ENCODE measurements at regions of chr22 and their contacts with region 1.

Region 1: DNA sequence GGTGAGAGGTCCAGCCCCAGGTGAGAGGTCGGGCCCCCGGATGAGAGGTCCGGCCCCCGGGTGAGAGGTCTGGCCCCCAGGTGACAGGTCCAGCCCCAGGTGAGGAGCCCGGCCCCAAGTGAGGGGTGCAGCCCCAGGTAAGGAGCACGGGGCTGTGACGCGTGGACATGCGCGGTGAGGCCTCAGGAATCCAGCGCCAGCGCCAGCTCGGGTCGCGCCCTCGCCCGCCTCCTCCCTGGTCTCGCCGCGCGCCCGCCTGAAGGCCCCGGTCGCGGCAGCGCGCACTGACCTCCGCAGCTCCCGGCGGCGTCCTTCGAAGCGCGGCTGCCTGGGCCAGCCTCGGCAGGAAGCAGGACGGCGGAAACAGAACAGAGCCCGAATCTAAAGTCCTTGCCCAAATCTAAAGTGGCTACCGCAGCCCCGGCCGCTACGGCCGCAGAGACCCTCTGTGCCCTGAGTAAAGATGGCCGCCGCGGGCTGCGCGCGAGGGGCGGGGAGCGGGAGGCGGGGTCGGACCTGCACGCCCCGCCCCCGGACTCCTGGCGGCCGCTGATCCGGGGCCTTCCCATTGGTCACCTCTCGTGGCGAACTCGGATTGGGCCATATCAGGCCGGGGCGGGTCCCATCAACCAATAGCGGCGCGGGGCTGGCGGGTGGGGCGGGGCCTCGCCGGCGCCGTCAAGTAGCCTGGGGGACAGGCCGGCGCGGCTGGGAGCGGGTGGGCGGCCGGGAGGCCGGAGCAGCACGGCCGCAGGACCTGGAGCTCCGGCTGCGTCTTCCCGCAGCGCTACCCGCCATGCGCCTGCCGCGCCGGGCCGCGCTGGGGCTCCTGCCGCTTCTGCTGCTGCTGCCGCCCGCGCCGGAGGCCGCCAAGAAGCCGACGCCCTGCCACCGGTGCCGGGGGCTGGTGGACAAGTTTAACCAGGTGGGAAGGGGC is at the starts of genes ALG12 and CRELD2:
- DNase-seq: peak; percentile 99
- ATAC-seq: peak; percentile 99
- H3K4me3 Mint-ChIP-seq: peak within 1 kb of the TSS; percentile 79
- H3K27ac Mint-ChIP-seq: peak within 1 kb of the TSS; percentile 63
- H3K4me1 Mint-ChIP-seq: peaks cover 18% of the 10 kb centered on the region
- H3K27me3 Mint-ChIP-seq: no peaks in the 10 kb centered on the region
- total RNA-seq, gene ALG12: 13.6 to 13.7 TPM
- total RNA-seq, gene CRELD2: 15.2 to 16.4 TPM

Region 2: GRCh38 chr22:49460592-49461281 is 457.5 kb before region 1 on chr22:
- CTCF ChIA-PET with region 1: no interaction called
- POLR2A ChIA-PET with region 1: no interaction called
- intact Hi-C with region 1: no loop called
- DNase-seq: no peak
- ATAC-seq: no peak
- H3K4me3 Mint-ChIP-seq: no peak overlapping the region
- H3K27ac Mint-ChIP-seq: no peak overlapping the region
- H3K4me1 Mint-ChIP-seq: no peaks in the 10 kb centered on the region
- H3K27me3 Mint-ChIP-seq: no peaks in the 10 kb centered on the region

Region 3: GRCh38 chr22:49767355-49768062 is 150.7 kb before region 1 on chr22:
- CTCF ChIA-PET with region 1: interaction called, 11 read pairs
- POLR2A ChIA-PET with region 1: no interaction called
- intact Hi-C with region 1: loop called (anchors 2 to 5 kb)
- DNase-seq: peak; percentile 51
- ATAC-seq: peak; percentile 68
- H3K4me3 Mint-ChIP-seq: no peak overlapping the region
- H3K27ac Mint-ChIP-seq: no peak overlapping the region
- H3K4me1 Mint-ChIP-seq: peaks cover 8% of the 10 kb centered on the region
- H3K27me3 Mint-ChIP-seq: no peaks in the 10 kb centered on the region

Region 4: GRCh38 chr22:49838771-49839717 is 79.2 kb before region 1 on chr22:
- CTCF ChIA-PET with region 1: no interaction called
- POLR2A ChIA-PET with region 1: no interaction called
- intact Hi-C with region 1: loop called in 1 of 2 experiments (anchors 1 kb)
- DNase-seq: peak; percentile 92
- ATAC-seq: peak; percentile 87
- H3K4me3 Mint-ChIP-seq: peak overlapping the region; percentile 73
- H3K27ac Mint-ChIP-seq: peak overlapping the region; percentile 98
- H3K4me1 Mint-ChIP-seq: peaks cover 35% of the 10 kb centered on the region
- H3K27me3 Mint-ChIP-seq: no peaks in the 10 kb centered on the region

Region 5: DNA sequence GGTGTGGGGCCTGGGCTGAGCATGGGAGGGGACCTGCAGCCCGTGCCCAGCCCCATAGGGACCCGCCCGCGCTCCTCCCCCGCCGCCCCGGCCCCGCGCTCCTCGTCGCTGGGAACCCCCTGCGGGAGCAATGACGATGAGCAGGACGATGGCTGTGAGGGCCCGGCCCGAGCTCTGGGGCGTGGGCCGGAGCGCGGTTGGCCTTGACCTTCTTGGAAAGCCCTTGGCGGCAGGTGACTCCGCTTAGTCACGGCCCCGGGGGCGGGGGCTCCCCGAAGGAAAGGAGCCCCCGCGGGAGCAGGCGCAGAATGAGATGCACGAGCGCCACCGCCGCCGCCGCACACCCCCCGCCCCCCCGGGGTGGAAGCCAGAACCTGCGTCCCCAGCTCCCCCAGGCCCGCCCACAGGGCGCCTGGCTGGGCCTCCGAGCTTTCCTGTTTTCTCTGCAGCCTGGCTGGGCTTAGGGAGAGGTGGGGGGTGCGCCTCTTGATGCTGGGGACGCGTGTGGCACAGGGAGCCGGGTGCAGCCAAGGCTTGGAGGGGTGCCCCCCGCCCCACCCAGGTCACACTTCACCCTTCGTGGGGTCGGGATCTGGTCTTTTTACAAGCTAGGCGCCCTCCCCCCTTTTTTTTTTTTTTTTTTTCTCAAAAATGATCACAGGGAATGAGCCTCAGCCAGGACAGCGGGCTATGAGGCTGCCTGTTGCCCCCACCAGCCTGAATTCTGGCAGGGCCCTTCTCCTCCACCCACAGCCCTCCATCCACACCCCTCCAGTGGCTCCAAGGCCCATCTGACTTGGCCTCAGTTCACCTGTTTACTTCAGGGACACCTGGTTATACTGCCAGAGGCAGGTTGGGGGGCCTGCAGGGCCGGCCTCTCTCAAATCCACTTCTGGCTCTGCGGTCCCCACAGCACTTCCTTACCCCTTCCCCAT is 18.0 kb after region 1 on chr22:
- CTCF ChIA-PET with region 1: no interaction called
- POLR2A ChIA-PET with region 1: no interaction called
- intact Hi-C with region 1: loop called in 1 of 2 experiments (anchors 1 kb)
- DNase-seq: peak; percentile 99
- ATAC-seq: peak; percentile 84
- H3K4me3 Mint-ChIP-seq: peak overlapping the region; percentile 64
- H3K27ac Mint-ChIP-seq: peak overlapping the region; percentile 85
- H3K4me1 Mint-ChIP-seq: peaks cover 43% of the 10 kb centered on the region
- H3K27me3 Mint-ChIP-seq: no peaks in the 10 kb centered on the region

Region 6: GRCh38 chr22:50244420-50245213 is 326.4 kb after region 1 on chr22 and contains the start of gene TUBGCP6:
- CTCF ChIA-PET with region 1: no interaction called
- POLR2A ChIA-PET with region 1: no interaction called
- intact Hi-C with region 1: loop called in 1 of 2 experiments (anchors 1 kb)
- DNase-seq: peak; percentile 96
- ATAC-seq: peak; percentile 80
- H3K4me3 Mint-ChIP-seq: peak within 1 kb of the TSS; percentile 94
- H3K27ac Mint-ChIP-seq: peak within 1 kb of the TSS; percentile 100
- H3K4me1 Mint-ChIP-seq: peaks cover 23% of the 10 kb centered on the region
- H3K27me3 Mint-ChIP-seq: no peaks in the 10 kb centered on the region
- total RNA-seq, gene TUBGCP6: 42.2 to 49.2 TPM